ENCODE measurements at regions of chr2 and their contacts with region 1.

Region 1: GRCh38 chr2:177332041-177332991 is 60.3 kb upstream of the AGPS start:
- DNase-seq: peak; percentile 62 to 70
- H3K4me3 ChIP-seq: no peak overlapping the region
- H3K4me1 ChIP-seq: peaks cover 4% of the 10 kb centered on the region; the same call in 1 of the 2 replicates
- H3K27me3 ChIP-seq: 0 out of 2 replicates have a peak, but pooled peaks cover 2% of the 10 kb centered on the region

Region 2: DNA sequence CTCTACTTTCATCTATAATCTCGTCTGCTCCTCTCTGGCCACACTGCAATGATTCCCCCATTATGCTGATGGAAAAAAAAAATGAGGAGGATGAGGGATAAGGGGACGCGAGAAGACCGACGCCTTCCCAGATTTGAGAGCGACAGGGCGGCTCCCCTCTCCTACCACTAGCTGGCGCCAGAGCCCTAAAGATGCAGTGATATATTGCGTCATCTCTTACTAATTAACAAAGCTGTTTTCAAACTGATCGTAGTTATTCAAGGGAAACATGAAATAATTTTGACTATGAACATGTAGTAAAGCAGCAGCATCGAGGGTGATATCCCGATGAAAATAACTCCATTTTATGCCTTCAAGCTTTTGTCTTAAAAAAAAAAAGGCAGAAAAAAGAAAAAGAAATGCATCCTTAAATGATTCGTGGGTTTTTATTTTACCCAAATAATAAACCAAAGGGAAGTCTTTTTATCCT is 167.7 kb before region 1 on chr2:
- in situ Hi-C with region 1: loop called (anchors 5 kb)
- DNase-seq: peak; percentile 79 to 89
- H3K4me3 ChIP-seq: no peak overlapping the region
- H3K4me1 ChIP-seq: peaks cover 27% of the 10 kb centered on the region
- H3K27me3 ChIP-seq: peaks cover 8% of the 10 kb centered on the region; the same call in 1 of the 2 replicates

Region 3: DNA sequence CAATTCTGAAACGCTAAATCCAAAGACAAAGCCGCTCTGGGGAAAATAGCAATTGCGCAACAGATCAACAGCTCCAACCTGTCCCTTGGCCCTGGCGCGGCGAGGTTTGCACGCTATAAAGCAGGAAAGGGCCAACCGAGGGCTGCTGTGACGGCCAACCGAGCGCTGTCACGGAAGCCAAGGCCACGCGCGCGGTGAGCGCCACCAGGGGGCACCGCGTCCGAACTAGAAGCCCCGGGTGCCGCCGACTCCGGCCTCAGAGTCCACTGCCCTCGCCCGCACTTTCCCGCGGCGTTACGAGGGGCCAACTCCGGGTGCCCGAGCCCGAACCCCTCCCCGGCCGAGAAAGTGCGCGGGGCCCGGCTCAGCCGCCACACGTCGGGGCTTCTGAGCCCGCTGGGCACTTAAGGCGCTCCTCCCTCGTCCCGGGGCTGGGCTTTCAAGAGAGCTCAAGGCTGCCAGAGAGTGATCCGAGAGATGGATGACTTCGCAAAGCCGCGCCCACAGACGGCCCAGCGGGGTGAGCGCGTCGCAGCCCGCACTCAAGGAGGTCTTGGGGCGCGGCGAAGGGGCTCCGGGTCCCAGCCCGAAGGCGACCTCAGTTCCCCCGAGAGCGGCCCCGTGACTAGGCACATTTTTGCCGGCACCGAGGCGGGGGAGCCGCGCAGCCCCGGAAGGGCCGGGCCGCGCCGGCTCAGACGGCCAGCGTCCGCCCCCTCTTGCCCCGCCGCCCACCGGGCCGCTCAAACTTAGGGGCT is 68.7 kb before region 1 on chr2:
- in situ Hi-C with region 1: loop called (anchors 10 kb)
- DNase-seq: peak; percentile 92 to 99
- H3K4me3 ChIP-seq: peak overlapping the region; percentile 91
- H3K4me1 ChIP-seq: peaks cover 27% of the 10 kb centered on the region
- H3K27me3 ChIP-seq: no peaks in the 10 kb centered on the region

Region 4: GRCh38 chr2:177520356-177520723 is 188.0 kb after region 1 on chr2:
- in situ Hi-C with region 1: no loop called
- DNase-seq: no peak
- H3K4me3 ChIP-seq: no peak overlapping the region
- H3K4me1 ChIP-seq: peaks cover 24% of the 10 kb centered on the region
- H3K27me3 ChIP-seq: no peaks in the 10 kb centered on the region

Region 5: DNA sequence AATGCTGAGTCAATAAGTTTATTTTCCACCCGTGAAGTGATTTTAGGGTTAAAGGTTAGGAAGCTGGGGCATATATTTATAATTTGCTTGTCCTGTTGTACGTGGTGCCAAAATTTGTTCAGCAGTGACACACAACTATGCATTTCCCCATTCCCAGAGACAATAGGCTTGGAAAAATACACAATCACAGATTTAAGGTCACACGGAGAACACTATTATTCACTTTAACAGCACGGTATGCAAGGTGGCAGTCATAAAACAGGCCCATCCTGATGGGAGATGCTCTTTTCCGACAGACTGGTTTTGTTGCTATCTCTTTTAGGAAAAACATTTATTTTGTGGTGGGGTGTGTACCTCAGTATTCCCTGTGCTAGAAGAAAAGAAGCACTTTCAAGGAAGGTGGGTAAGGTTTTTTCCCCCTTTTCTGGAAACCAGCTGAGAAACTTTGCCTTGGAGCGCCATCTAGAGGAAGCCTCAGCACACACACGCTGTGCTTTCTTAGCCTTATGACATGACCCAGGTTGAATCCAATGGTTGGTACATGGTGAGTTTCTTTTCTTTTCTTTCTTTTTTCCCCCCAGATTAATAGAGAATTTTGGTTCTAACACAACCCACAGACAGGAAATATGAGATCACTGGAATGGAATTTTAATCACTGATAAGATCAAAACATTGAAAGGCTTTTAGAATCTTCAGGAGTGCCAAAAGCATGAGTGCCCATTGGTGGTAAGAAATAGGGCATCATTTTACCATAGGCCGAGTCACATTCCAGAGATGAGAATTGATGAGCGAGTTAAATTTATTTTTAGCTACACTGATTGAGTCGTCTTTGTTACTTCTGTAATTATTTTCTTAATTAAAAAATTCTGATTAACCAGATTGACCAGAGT is 392.3 kb after region 1 on chr2:
- in situ Hi-C with region 1: loop called (anchors 10 kb)
- DNase-seq: peak; percentile 68 to 84
- H3K4me3 ChIP-seq: no peak overlapping the region
- H3K4me1 ChIP-seq: peaks cover 32% of the 10 kb centered on the region
- H3K27me3 ChIP-seq: peaks cover 5% of the 10 kb centered on the region

Region 6: DNA sequence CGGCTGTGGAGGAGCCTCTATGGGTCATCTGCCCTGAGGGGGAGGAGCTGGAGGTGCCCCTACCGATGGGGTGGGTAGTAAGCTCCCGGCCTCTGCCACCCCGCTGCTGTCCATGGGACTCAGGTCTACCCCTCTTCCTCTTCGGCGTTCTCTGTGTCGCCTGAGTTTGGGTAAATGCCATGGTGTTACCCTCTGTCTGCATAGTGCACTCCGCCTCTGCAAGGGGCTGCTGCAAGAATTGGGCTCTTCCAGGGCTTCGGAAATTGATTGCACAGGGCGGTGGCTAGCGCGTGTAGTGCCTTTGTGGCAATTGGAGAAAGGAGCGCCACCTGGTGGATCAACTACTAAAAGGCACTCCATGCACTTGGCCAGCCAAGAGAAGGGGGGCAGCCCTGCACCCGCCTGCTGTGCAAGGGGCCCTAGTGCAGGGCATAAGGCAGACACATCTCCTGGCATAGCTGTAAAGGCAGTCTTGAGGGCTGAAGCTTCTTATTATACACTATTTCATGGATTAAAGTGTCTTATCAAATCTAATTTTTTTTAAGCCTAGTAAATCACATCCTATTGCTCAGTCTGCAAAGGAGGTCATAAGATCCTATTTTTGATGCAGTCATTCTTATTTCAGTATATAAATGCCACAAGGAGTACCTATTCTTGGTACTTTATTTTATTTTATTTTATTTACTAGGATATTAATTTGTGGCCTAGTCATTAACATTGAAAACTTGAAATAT is 431.4 kb after region 1 on chr2:
- in situ Hi-C with region 1: loop called (anchors 5 kb)
- DNase-seq: peak; percentile 67 to 93
- H3K4me3 ChIP-seq: no peak overlapping the region
- H3K4me1 ChIP-seq: peaks cover 9% of the 10 kb centered on the region
- H3K27me3 ChIP-seq: peaks cover 6% of the 10 kb centered on the region; the same call in 1 of the 2 replicates